Naive thymus-derived CD8-positive, alpha-beta T cell (primary cell): ENCODE measurements at regions of chr11 and their contacts with region 1.

Region 1: GRCh38 chr11:62591448-62592145 is at the start of gene TUT1:
- DNase-seq: peak; percentile 81 to 98 (median 96)
- ATAC-seq: peak; percentile 84 to 86
- H3K4me3 Mint-ChIP-seq: peak within 1 kb of the TSS; percentile 85 to 97 (median 94)
- H3K27ac Mint-ChIP-seq: peak within 1 kb of the TSS; percentile 95 to 99 (median 98)
- H3K4me1 Mint-ChIP-seq: peaks cover 15 to 60% (median 51%) of the 10 kb centered on the region in 4 donors
- H3K27me3 Mint-ChIP-seq: peaks cover 0 to 3% (median 0%) of the 10 kb centered on the region in 5 donors
- polyA plus RNA-seq, gene TUT1: 12.8 to 24.4 (median 16.9) TPM

Region 2: DNA sequence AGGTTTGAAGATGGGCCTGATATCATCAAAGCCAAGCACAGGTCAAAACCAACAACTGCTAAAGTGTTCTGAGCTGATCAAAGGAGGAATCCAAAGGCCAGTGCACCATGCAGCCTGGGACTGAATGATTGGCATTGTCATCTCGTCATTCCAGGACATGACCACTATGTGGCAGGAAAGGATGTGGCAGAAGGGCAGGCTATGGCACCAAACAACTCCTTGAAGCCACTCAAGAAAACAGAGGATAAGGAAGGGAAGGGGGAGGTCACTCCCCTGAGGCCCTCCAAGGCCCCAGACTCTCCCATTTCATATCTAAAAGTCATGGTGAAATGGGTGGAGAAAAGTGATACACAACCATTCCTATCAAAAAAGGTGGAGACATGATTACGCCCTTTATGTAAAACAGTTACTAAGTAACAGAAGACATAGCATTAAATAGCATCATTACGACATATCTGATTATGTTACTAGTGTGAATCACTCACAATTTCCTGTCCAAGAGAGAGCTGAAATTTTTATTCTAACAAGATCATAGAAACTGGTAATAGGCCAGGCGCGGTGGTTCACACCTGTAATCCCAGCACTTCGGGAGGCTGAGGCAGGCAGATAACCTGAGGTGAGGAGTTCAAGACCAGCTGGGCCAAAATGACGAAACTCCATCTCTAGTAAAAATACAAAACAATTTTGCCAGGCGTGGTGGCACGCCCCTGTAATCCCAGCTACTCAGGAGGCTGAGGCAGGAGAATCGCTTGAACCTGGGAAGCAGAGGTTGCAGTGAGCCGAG is 94.3 kb before region 1 on chr11:
- POLR2A ChIA-PET with region 1: no interaction called
- DNase-seq: peak in 2 of 10 donors; percentile 8 to 9
- ATAC-seq: peak; percentile 20 to 52
- H3K4me3 Mint-ChIP-seq: no peak overlapping the region
- H3K27ac Mint-ChIP-seq: peak overlapping the region in 2 of 10 donors; percentile 3 to 14
- H3K4me1 Mint-ChIP-seq: peaks cover 0 to 11% (median 1%) of the 10 kb centered on the region in 4 donors
- H3K27me3 Mint-ChIP-seq: peaks cover under 1 to 9% (median 7%) of the 10 kb centered on the region in 5 donors

Region 3: DNA sequence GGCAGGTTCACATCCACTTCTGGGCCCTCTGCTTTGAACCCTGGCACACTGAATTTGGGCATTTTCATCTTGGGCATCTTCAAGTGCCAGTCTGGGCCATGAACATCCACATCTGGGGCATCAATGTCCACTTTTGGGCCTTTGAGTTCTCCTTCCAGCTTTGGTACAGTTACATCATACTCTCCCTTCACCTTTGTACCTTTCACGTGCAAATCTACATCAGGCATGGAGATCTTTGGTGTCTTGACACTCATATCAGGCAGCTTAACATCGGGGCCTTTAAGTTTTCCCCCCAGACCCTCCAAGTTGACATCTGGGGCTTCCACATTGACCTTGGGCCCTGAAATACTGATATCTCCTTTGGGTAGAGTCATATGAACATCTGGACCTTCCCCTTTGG is 59.5 kb before region 1 on chr11:
- POLR2A ChIA-PET with region 1: no interaction called
- DNase-seq: no peak
- ATAC-seq: no peak
- H3K4me3 Mint-ChIP-seq: no peak overlapping the region
- H3K27ac Mint-ChIP-seq: peak overlapping the region in 1 of 10 donors; percentile 8
- H3K4me1 Mint-ChIP-seq: peaks cover 3 to 9% (median 6%) of the 10 kb centered on the region in 4 donors
- H3K27me3 Mint-ChIP-seq: no peaks in the 10 kb centered on the region

Region 4: DNA sequence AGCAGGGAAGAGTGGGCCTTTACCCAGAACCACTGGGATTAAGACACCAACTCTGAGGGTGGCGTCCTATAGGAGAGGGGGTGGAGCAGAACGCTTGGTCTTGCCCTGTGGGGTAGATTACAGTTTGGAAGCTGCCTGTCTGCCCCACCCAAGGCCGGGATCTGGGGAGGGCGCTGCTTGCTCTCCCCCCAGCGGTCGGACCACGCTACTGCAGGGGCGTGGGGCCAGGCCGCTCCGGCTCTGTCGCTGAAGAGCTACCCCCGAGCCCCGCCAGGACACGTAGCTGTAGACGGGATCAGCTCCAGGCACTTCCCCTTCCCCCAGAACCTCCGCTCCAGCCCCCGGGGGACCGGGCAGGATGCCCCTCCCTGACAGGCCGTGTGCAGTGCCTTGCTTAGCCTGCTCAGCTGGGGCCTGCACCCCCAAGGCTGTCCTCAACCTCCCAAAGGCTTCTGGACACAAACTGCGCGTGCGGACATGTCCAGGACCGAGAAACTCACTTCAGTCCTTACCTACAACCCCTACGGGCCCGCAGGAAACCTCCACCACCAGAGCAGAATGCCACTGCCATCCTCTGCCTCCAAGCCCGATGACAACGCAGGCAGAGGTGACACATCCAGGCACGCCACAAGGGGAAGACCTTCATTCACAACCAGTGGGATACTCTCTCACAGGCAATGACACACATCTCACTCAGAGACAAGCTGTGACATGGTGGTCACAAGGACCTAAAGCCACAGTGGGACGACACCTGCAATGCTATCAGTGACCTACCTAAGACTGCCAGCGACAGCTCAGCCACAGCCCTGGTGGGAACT is 48.6 kb before region 1 on chr11:
- POLR2A ChIA-PET with region 1: interaction called, 11 read pairs
- DNase-seq: peak; percentile 49 to 80 (median 71)
- ATAC-seq: peak; percentile 28 to 39
- H3K4me3 Mint-ChIP-seq: peak overlapping the region; percentile 62 to 95 (median 92)
- H3K27ac Mint-ChIP-seq: peak overlapping the region; percentile 68 to 99 (median 88)
- H3K4me1 Mint-ChIP-seq: peaks cover 40 to 79% (median 74%) of the 10 kb centered on the region in 4 donors
- H3K27me3 Mint-ChIP-seq: no peaks in the 10 kb centered on the region

Region 5: GRCh38 chr11:62621567-62622470 is 30.2 kb after region 1 on chr11 and contains the start of gene B3GAT3:
- POLR2A ChIA-PET with region 1: interaction called, 81 read pairs
- DNase-seq: peak; percentile 87 to 98 (median 95)
- ATAC-seq: peak; percentile 83 to 85
- H3K4me3 Mint-ChIP-seq: peak within 1 kb of the TSS; percentile 86 to 97 (median 94)
- H3K27ac Mint-ChIP-seq: peak within 1 kb of the TSS; percentile 92 to 99 (median 98)
- H3K4me1 Mint-ChIP-seq: peaks cover 13 to 36% (median 32%) of the 10 kb centered on the region in 4 donors
- H3K27me3 Mint-ChIP-seq: peaks cover 0 to 2% (median 0%) of the 10 kb centered on the region in 5 donors
- polyA plus RNA-seq, gene B3GAT3: 35.6 to 51.3 (median 40.3) TPM

Region 6: GRCh38 chr11:62678770-62679696 is 87.4 kb after region 1 on chr11 and contains the start of gene UBXN1:
- POLR2A ChIA-PET with region 1: interaction called, 251 read pairs
- DNase-seq: peak; percentile 68 to 89 (median 78)
- ATAC-seq: peak; percentile 84 to 87
- H3K4me3 Mint-ChIP-seq: peak within 1 kb of the TSS; percentile 86 to 94 (median 90)
- H3K27ac Mint-ChIP-seq: peak within 1 kb of the TSS; percentile 94 to 98 (median 95)
- H3K4me1 Mint-ChIP-seq: peaks cover 19 to 42% (median 38%) of the 10 kb centered on the region in 4 donors
- H3K27me3 Mint-ChIP-seq: no peaks in the 10 kb centered on the region
- polyA plus RNA-seq, gene UBXN1: 188 to 219 (median 218) TPM

Region 7: GRCh38 chr11:62753736-62754603 is 162.4 kb after region 1 on chr11 and contains the start of gene ZBTB3:
- POLR2A ChIA-PET with region 1: interaction called, 17 read pairs
- DNase-seq: peak; percentile 93 to 100 (median 96)
- ATAC-seq: peak; percentile 95 to 96
- H3K4me3 Mint-ChIP-seq: peak within 1 kb of the TSS; percentile 91 to 100 (median 97)
- H3K27ac Mint-ChIP-seq: peak within 1 kb of the TSS; percentile 88 to 100 (median 99)
- H3K4me1 Mint-ChIP-seq: peaks cover 8 to 43% (median 28%) of the 10 kb centered on the region in 4 donors
- H3K27me3 Mint-ChIP-seq: no peaks in the 10 kb centered on the region
- polyA plus RNA-seq, gene ZBTB3: 2.1 to 6.7 (median 3.6) TPM

Region 8: DNA sequence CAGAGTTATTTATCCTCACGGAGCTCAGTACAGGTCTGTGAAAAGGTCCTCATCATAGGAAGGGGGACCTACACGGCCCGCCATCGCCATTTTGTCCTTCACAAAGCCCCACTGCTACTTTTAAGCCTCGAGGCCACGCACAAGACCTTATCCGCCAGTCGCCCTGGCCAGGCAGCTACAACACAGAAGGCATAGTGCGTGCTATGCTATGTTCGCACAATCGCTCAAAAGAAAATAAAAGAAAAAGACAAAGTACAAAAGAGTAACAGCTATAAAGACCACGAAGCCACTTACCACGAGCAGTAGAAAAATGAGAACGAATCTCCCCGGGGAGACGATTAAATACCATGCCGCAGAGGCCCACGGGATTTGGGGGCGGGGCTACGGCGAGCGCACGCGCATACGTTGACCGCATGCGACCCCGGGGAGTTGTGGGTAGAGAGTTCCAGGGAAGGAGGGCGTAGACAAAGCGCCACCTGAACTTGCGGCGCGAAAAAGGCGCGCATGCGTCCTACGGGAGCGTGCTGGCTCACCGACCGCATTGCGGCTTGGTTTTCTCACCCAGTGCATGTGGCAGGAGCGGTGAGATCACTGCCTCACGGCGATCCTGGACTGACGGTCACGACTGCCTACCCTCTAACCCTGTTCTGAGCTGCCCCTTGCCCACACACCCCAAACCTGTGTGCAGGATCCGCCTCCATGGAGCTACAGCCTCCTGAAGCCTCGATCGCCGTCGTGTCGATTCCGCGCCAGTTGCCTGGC is 264.2 kb after region 1 on chr11:
- POLR2A ChIA-PET with region 1: interaction called, 24 read pairs
- DNase-seq: peak; percentile 94 to 99 (median 98)
- ATAC-seq: peak; percentile 87 to 90
- H3K4me3 Mint-ChIP-seq: peak overlapping the region; percentile 95 to 99 (median 98)
- H3K27ac Mint-ChIP-seq: peak overlapping the region; percentile 88 to 99 (median 98)
- H3K4me1 Mint-ChIP-seq: peaks cover 33 to 54% (median 52%) of the 10 kb centered on the region in 4 donors
- H3K27me3 Mint-ChIP-seq: peaks cover 0 to 4% (median 0%) of the 10 kb centered on the region in 5 donors